ENCODE measurements at regions of chr18 and their contacts with region 1.

Region 1: DNA sequence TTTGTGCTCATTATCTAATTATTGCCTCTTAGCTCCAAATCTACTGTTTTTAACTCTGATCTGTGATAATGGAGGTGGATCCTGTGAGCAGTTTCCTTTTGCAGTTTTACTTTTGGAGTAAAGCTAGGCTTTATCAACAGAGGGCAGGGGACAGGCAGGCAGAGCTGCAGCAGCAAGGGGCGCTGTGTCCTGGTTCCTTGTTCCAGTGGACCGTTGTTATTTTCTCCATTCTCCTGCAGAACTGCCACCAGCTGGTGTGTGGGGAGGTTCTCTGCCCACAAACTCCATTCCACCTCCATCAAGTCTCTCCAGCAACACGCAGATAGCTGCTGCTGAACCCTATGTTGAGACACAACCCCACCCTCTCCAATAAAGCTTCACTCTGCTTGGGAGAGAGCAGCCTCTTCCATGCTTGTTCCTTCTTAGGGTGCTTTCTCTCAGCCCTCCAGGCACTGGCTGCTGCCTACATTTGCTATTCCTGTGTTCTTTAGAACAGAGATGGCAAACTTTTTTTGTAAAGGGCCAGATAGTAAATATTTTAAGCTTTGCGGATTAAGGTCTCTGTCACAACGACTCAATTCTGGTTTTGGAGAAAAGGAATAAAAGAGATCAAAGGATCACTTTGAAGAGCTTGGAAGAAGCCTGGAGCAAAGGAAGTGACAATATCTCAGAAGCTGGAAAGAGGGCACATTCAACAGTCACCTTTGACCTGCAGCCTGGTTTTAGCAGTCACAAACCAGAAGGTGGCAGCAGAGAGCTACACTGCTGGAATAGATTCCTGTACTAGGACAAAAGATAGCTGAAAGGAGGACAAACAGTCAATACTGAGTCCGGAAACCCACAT is 208.8 kb downstream of the CCDC178 start:
- DNase-seq: peak in 1 of 2 donors; percentile 57
- ATAC-seq: peak; percentile 82
- H3K4me3 ChIP-seq: no peak overlapping the region
- H3K27ac ChIP-seq: no peak overlapping the region
- H3K4me1 ChIP-seq: no peaks in the 10 kb centered on the region
- H3K27me3 ChIP-seq: no peaks in the 10 kb centered on the region

Region 2: DNA sequence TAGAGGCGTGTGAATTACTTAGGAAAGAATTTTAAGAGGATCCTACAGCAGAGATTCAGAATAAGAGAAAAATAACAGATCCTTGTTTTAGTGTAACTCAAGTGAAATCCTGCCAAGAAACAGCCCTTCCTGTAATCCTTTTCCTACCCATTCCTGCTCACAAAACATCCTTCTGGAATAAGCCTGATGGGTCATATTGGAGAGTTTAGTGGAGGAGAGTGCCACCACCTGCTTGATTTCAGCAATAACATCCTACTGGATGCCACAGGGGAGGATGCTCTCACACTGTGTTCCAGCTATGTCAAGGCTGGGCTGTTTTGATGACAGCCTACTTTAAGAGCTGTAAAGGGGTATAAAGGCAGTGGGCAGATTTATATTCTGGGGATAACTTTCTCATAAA is 263.6 kb after region 1 on chr18:
- intact Hi-C with region 1: loop called (anchors 10 kb)
- DNase-seq: no peak
- ATAC-seq: no peak
- H3K4me3 ChIP-seq: no peak overlapping the region
- H3K27ac ChIP-seq: no peak overlapping the region
- H3K4me1 ChIP-seq: no peaks in the 10 kb centered on the region
- H3K27me3 ChIP-seq: peaks cover 0 to 1% of the 10 kb centered on the region in 2 donors

Region 3: GRCh38 chr18:33673689-33674088 is 442.0 kb after region 1 on chr18:
- intact Hi-C with region 1: no loop called
- DNase-seq: no peak
- ATAC-seq: no peak
- H3K4me3 ChIP-seq: no peak overlapping the region
- H3K27ac ChIP-seq: no peak overlapping the region
- H3K4me1 ChIP-seq: no peaks in the 10 kb centered on the region
- H3K27me3 ChIP-seq: no peaks in the 10 kb centered on the region

Region 4: GRCh38 chr18:33761363-33761762 is 529.7 kb after region 1 on chr18:
- intact Hi-C with region 1: loop called in 1 of 2 experiments (anchors 5 kb)
- DNase-seq: no peak
- ATAC-seq: no peak
- H3K4me3 ChIP-seq: no peak overlapping the region
- H3K27ac ChIP-seq: no peak overlapping the region
- H3K4me1 ChIP-seq: no peaks in the 10 kb centered on the region
- H3K27me3 ChIP-seq: no peaks in the 10 kb centered on the region